ENCODE measurements at regions of chr12 and their contacts with region 1.

Region 1: GRCh38 chr12:75964150-75964549 is 67.4 kb downstream of the PHLDA1 start:
- DNase-seq: no peak
- H3K4me3 ChIP-seq: no peak overlapping the region
- H3K4me3 Mint-ChIP-seq: no peak overlapping the region
- H3K27ac Mint-ChIP-seq: peak overlapping the region; percentile 23
- H3K4me1 ChIP-seq: peaks cover 48% of the 10 kb centered on the region
- H3K4me1 Mint-ChIP-seq: peaks cover 52% of the 10 kb centered on the region
- H3K27me3 ChIP-seq: no peaks in the 10 kb centered on the region
- H3K27me3 Mint-ChIP-seq: no peaks in the 10 kb centered on the region
- CTCF ChIP-seq: no peak

Region 2: DNA sequence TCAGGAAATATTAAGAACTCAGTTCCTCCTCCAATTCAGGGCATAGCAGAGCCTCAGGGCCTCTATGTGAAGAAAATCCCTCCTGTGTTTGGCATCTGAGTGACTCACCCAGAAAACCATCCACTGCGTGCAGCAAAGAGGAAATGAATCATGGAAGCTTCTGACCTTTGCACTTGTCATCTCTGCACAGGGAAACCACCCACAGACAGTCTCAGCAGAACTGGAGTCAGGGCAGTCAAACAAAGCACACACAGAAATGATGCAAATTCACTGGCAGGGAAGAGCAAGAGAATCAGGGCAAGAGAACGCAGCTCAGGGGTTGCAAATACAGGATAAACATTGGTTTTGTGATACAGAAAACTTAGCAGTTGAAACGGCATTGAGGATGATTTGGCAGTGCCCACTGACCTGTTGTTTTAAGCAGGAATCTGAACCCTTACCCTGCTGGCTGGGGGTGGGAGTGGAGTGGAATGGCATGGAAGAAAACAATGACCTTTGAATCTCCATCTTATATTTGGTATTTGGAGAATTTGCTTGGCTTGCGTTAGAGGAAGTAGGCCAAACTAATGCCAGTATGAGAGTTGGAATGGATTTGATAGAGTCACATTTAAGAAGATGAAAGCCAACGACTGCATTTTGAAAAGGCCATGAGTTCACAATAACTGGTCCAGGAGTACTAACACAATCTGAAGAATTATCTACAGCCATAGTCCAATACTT is 14.0 kb after region 1 on chr12:
- CTCF ChIA-PET with region 1: interaction called, 5 read pairs
- POLR2A ChIA-PET with region 1: interaction called, 5 read pairs
- intact Hi-C with region 1: loop called (anchors 1 kb)
- DNase-seq: peak; percentile 91 to 94
- H3K4me3 ChIP-seq: no peak overlapping the region
- H3K4me3 Mint-ChIP-seq: peak overlapping the region; percentile 63
- H3K27ac Mint-ChIP-seq: peak overlapping the region; percentile 92
- H3K4me1 ChIP-seq: peaks cover 68% of the 10 kb centered on the region
- H3K4me1 Mint-ChIP-seq: peaks cover 46% of the 10 kb centered on the region
- H3K27me3 ChIP-seq: no peaks in the 10 kb centered on the region
- H3K27me3 Mint-ChIP-seq: no peaks in the 10 kb centered on the region
- CTCF ChIP-seq: no peak

Region 3: DNA sequence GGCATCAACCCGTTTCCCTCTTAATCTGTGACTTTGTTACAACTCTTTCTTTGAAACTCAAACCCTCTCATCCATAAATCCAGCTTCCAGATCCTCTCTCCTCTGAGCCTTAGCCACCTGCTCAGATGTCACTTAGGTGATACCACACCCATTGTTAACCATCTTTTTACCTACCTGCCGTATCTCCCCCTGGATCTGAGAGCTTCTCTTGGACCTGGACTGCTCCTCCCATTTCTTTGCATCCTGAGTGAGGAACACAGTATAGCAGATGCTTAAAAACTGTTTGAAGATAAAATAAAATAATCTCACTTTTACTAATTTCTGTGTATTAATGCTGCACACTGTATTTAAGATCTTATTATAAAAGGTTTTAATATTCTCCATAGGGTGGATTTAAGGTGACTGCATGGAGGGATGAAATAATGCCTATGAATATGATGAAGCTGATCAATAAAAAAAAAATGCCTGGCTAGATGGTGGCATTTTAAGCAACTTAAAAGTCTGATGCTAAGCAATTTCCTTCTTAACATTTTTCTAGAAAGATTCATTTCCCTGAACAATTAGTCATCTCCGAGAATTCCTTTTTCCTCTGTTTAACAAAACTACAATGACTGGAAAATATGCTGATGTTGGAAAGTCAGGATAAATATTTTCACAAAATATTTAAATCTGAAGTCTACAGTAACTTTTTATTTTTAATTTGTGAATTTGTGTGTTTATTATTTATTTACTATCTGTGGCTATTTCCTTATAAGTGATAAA is 159.5 kb after region 1 on chr12:
- CTCF ChIA-PET with region 1: no interaction called
- POLR2A ChIA-PET with region 1: no interaction called
- intact Hi-C with region 1: no loop called
- DNase-seq: no peak
- H3K4me3 ChIP-seq: no peak overlapping the region
- H3K4me3 Mint-ChIP-seq: no peak overlapping the region
- H3K27ac Mint-ChIP-seq: no peak overlapping the region
- H3K4me1 ChIP-seq: no peaks in the 10 kb centered on the region
- H3K4me1 Mint-ChIP-seq: no peaks in the 10 kb centered on the region
- H3K27me3 ChIP-seq: no peaks in the 10 kb centered on the region
- H3K27me3 Mint-ChIP-seq: no peaks in the 10 kb centered on the region
- CTCF ChIP-seq: no peak